A549 (cell line): ENCODE measurements at regions of chr10 and their contacts with region 1.

Region 1: GRCh38 chr10:97888641-97889262 is 39.1 kb downstream of the GOLGA7B start:
- DNase-seq: peak; percentile 74 to 86
- ATAC-seq: peak; percentile 66 to 70
- H3K4me3 ChIP-seq: peak overlapping the region; percentile 25; the same call in 2 of the 3 replicates
- H3K27ac ChIP-seq: peak overlapping the region; percentile 95 to 97
- H3K4me1 ChIP-seq: peaks cover 43% of the 10 kb centered on the region
- CTCF ChIP-seq: peak; percentile 47
- EP300 ChIP-seq: peak in 1 of 2 experiments; percentile 27; a peak in 1 of 5 replicates
- POLR2A ChIP-seq: no peak
- RAD21 ChIP-seq: no peak

Region 2: DNA sequence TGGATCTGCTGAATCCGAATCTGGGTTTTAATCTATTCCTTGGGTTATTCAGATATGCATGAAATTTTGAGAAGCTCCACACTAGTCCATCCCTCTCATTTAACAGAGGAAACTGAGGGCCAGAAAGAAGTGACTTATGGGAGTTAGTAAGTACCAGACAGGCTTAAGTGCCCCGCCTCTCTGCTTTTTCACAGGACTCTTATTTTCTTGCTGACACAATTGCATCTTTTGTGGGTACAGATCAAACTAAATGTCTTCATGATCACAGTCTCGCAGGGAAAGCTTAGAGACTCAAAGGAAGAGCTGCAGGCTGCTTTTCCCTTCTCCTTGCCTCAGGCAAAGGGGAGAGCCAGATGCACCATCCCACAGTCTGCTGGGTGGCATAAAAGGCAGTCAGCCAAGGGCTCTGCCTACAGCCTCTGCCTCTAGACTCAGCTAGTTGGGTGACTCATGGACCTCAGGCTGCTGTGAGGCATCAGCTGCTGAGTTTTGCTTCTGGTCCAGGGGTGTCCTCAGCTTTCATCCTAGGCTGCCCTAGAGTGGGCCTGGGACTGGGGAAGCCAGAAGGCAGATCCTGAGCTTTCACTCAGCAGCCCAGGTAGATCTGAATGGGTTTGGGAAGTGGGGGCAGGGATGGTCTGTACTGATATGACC is 27.5 kb before region 1 on chr10:
- CTCF ChIA-PET with region 1: interaction called, 3 read pairs
- POLR2A ChIA-PET with region 1: interaction called, 11 read pairs
- DNase-seq: peak; percentile 59 to 93
- ATAC-seq: peak; percentile 95 to 97
- H3K4me3 ChIP-seq: no peak overlapping the region
- H3K27ac ChIP-seq: peak overlapping the region; percentile 63 to 79
- H3K4me1 ChIP-seq: peaks cover 40% of the 10 kb centered on the region
- CTCF ChIP-seq: no peak
- EP300 ChIP-seq: peak in 1 of 2 experiments; percentile 10; a peak in 1 of 5 replicates
- POLR2A ChIP-seq: no peak
- RAD21 ChIP-seq: no peak

Region 3: DNA sequence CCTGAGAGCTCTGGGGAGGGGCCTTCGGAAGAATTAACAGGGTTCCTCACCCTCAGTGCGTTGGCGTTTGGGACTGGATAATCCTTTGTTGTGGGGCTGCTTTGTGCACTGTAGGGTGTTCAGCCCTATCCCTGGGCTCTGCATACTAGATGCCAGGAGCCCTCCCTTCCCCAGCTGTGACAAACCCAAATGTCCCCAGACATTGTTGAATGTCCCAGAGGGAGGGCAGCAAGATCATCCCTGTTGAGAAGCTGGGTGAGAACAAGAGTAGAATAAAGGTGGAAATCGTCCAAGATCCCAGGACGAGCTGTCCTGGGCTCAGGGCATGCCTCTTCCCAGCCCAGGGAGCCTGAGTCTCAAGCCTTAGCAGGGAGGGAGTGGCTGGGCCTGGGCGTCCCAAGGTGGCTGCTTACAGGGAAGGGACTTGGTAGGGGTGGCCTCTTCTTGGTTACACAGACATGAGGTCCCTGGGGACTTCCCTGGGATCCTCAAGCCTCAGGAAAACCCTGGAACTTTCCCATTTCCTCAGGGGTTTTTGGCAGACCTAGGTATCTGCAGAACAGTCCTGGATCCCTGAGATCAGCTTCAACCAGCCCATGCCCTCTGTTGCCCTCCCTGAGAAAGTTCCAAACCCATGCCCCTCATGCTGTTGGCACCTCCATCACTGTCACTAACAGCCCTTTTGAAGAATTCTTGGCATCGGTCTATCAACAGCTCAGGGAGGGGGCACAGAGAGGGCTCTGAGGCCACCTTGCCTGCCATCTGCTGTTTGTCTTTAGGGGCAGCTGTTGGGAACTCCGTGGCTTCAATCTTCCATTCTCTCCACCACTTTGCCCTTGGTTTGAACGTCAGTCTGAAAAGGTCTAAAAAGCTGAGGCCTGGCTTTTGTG is 14.6 kb after region 1 on chr10:
- CTCF ChIA-PET with region 1: interaction called, 10 read pairs
- POLR2A ChIA-PET with region 1: interaction called, 11 read pairs
- DNase-seq: no peak
- ATAC-seq: peak in 1 of 2 experiments; percentile 46; a peak in 3 of 6 replicates
- H3K4me3 ChIP-seq: no peak overlapping the region
- H3K27ac ChIP-seq: no peak overlapping the region
- H3K4me1 ChIP-seq: peaks cover 5% of the 10 kb centered on the region; the same call in 1 of the 3 replicates
- CTCF ChIP-seq: no peak
- EP300 ChIP-seq: no peak
- POLR2A ChIP-seq: no peak
- RAD21 ChIP-seq: no peak